Psoas muscle (tissue), 8 donors: ENCODE measurements at regions of chr16 and their contacts with region 1.

Region 1: DNA sequence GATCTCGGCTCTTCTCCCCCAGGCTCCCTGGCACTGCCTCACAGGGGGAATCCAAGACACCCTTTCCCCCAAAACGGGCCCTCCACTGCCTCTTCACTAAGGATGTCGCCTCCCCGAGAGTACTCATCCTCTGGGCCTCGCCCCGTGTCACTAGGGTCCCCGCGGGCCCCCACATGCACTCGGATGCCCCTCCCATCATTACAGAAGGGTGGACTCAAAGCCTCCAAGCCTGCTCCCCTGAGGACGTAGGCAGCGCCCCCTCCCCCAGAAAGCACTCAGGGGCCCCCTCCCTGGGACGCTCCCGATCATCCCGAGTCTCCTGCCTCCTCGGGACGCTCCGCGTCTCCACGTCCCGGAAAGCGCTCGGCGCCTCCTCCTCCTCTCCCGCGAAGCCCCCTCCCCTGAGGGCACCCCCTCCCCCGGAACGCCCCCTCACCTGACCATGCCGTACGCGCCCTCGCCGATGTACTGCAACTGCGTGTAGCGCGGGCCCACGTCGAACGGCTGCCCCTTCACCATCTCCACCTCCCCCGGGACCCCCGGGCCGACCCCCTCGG is 338 bp downstream of the MAPK3 start:
- DNase-seq: peak in 1 of 2 donors; percentile 25
- ATAC-seq: peak; percentile 5 to 38 (median 9)
- H3K4me3 ChIP-seq: peak overlapping the region; percentile 86
- H3K27ac ChIP-seq: peak overlapping the region; percentile 97
- H3K4me1 ChIP-seq: peaks cover 19% of the 10 kb centered on the region
- H3K27me3 ChIP-seq: no peaks in the 10 kb centered on the region
- CTCF ChIP-seq: no peak

Region 2: GRCh38 chr16:30065143-30065850 is 57.4 kb before region 1 on chr16 and contains the start of gene ALDOA:
- intact Hi-C with region 1: loop called in 1 of 2 experiments (anchors 10 kb)
- DNase-seq: peak; percentile 99
- ATAC-seq: peak; percentile 77 to 84 (median 77)
- H3K4me3 ChIP-seq: peak within 1 kb of the TSS; percentile 91
- H3K27ac ChIP-seq: peak within 1 kb of the TSS; percentile 99
- H3K4me1 ChIP-seq: peaks cover 61% of the 10 kb centered on the region
- H3K27me3 ChIP-seq: no peaks in the 10 kb centered on the region
- CTCF ChIP-seq: no peak
- total RNA-seq, gene ALDOA: 5,088 to 7,531 (median 6,001) TPM